ENCODE measurements at regions of chr7 and their contacts with region 1.

Region 1: GRCh38 chr7:45917658-45918057 is 3.4 kb downstream of the IGFBP3 start:
- DNase-seq: peak; percentile 93
- H3K4me3 Mint-ChIP-seq: no peak overlapping the region
- H3K27ac Mint-ChIP-seq: no peak overlapping the region
- H3K4me1 Mint-ChIP-seq: peaks cover 14% of the 10 kb centered on the region
- H3K27me3 Mint-ChIP-seq: peaks cover 38% of the 10 kb centered on the region

Region 2: GRCh38 chr7:46352004-46352954 is 434.6 kb after region 1 on chr7:
- intact Hi-C with region 1: loop called (anchors 2 kb)
- DNase-seq: peak; percentile 58
- H3K4me3 Mint-ChIP-seq: no peak overlapping the region
- H3K27ac Mint-ChIP-seq: no peak overlapping the region
- H3K4me1 Mint-ChIP-seq: no peaks in the 10 kb centered on the region
- H3K27me3 Mint-ChIP-seq: no peaks in the 10 kb centered on the region

Region 3: DNA sequence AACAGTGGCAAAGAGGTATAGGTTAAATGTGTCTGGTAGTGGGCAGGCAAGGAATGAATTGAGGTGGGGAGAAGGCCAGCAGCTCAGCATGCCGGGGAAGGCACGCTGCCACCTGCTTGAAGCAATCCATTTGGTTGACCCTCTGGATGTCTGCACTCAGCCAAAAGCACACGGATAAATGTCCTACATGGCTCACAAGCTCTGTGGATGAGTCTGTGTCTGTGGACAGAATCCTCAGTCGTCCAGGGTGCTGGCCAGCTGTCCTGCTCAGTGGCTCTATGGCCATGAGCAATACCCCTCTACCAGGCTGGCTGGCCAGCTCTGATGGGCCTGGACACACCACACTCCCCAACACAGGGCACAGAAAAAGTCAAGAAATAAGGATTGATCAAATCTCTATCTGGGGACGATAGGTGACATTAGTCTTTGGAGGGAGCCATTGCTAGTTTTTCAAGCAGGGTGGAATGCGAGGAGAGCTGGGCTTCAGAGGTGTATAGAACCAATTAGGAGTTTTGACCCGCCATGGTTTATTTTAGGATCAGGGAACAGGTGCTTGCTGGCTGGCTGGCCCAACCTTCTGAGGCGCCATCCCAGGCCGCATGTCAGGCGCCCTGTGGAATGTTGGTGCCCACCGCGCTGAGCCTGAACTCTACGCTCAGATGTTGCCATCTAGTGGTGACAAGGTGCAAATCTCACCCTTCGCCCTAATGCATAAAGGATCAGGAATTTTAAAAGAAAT is 1170.8 kb after region 1 on chr7:
- intact Hi-C with region 1: loop called (anchors 2 kb)
- DNase-seq: peak; percentile 65
- H3K4me3 Mint-ChIP-seq: no peak overlapping the region
- H3K27ac Mint-ChIP-seq: no peak overlapping the region
- H3K4me1 Mint-ChIP-seq: no peaks in the 10 kb centered on the region
- H3K27me3 Mint-ChIP-seq: no peaks in the 10 kb centered on the region